IMR-90 (cell line): ENCODE measurements at regions of chr17 and their contacts with region 1.

Region 1: GRCh38 chr17:7989781-7990655 is 12.4 kb upstream of the GUCY2D start:
- DNase-seq: peak; percentile 44
- ATAC-seq: peak; percentile 94
- H3K4me3 ChIP-seq: peak overlapping the region; percentile 59
- H3K27ac ChIP-seq: no peak overlapping the region
- H3K4me1 ChIP-seq: peaks cover 5% of the 10 kb centered on the region; the same call in 1 of the 2 replicates
- H3K27me3 ChIP-seq: peaks cover 11% of the 10 kb centered on the region
- CTCF ChIP-seq: peak; percentile 81
- POLR2A ChIP-seq: no peak
- RAD21 ChIP-seq: peak; percentile 57

Region 2: GRCh38 chr17:7740481-7741001 is 249.5 kb before region 1 on chr17:
- CTCF ChIA-PET with region 1: interaction called, 4 read pairs
- POLR2A ChIA-PET with region 1: no interaction called
- dilution Hi-C with region 1: no loop called
- in situ Hi-C with region 1: loop called (anchors 25 kb)
- intact Hi-C with region 1: loop called (anchors 1 kb)
- DNase-seq: no peak
- ATAC-seq: no peak
- H3K4me3 ChIP-seq: no peak overlapping the region
- H3K27ac ChIP-seq: no peak overlapping the region
- H3K4me1 ChIP-seq: peaks cover 5% of the 10 kb centered on the region; the same call in 1 of the 2 replicates
- H3K27me3 ChIP-seq: peaks cover 43% of the 10 kb centered on the region
- CTCF ChIP-seq: no peak
- POLR2A ChIP-seq: no peak
- RAD21 ChIP-seq: no peak

Region 3: DNA sequence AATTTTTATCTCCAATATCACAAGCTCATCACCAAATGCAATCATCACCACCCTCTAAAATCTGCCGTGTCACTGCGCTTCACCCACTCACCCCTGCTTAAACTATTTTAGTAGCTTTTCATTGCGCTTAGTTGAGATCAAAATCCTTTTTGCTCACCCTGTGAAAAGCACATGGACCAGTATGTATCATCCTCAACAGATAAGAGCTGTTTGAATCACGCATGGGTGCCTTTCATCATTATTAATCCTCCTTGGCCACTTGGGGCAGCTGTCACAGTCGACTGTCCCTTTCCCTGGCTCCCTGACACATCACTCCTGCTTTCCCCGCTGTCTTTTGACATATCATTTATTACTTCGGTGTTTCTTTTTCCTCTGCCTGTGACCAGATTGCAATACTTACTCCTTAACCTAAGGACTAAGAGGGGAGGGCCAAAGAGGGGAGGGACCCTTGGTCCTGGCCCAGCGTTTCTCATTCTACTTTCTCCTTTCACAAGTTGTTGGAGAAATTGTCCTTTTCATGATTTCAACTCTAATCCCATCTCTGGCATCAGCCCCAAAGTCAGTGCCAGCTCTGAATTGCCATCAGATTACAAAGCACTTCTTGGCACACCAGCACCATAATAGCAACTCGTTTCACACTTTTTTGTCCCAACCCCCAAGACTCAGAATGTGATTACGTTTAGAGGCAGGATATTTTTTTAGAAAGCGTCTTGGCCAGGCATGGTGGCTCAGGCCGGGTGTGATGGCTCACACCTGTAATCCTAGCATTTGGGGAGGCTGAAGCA is 164.6 kb before region 1 on chr17:
- CTCF ChIA-PET with region 1: interaction called, 3 read pairs
- POLR2A ChIA-PET with region 1: no interaction called
- dilution Hi-C with region 1: no loop called
- in situ Hi-C with region 1: no loop called
- intact Hi-C with region 1: loop called (anchors 5 kb)
- DNase-seq: no peak
- ATAC-seq: peak; percentile 35
- H3K4me3 ChIP-seq: no peak overlapping the region
- H3K27ac ChIP-seq: no peak overlapping the region
- H3K4me1 ChIP-seq: no peaks in the 10 kb centered on the region; the same call in 1 of the 2 replicates
- H3K27me3 ChIP-seq: peaks cover 13% of the 10 kb centered on the region
- CTCF ChIP-seq: no peak
- POLR2A ChIP-seq: no peak
- RAD21 ChIP-seq: peak; percentile 21; the same call in 1 of the 2 replicates

Region 4: DNA sequence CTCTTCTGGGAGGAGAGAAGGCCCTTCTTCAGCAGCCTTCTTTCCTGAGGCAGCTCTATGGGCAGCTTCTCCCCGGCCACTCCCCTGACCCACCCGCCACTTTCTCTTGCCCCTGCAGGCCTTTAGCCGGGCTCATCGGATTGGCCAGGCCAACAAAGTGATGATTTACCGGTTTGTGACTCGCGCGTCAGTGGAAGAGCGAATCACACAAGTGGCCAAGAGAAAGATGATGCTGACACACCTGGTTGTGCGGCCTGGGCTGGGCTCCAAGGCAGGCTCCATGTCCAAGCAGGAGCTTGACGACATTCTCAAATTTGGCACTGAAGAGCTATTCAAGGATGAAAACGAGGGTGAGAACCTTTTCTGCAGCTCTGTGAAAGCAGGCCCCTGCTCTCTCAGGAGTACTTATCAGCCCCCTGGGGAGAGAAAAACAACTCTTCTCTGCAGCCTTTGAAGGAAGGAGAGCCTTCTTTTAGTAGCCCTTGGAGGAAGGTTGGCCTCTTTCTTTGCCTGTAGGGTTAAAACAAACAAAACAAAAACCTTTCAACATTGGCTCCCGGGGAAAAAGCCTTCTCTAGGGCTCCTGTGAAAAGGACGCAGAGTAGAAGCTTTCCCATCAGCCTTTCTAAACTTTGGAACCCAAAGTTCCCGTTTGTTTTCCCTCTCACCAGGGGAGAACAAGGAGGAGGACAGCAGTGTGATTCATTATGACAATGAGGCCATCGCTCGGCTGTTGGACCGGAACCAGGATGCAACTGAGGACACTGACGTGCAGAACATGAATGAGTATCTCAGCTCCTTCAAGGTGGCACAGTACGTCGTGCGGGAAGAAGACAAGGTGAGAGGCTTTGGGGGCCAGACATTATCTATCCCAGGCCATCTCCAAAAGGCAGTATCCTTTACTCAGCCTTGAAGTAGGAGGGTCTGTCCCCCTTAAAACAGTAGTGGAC is 86.6 kb before region 1 on chr17:
- CTCF ChIA-PET with region 1: interaction called, 10 read pairs
- POLR2A ChIA-PET with region 1: no interaction called
- dilution Hi-C with region 1: no loop called
- in situ Hi-C with region 1: no loop called
- intact Hi-C with region 1: no loop called
- DNase-seq: no peak
- ATAC-seq: no peak
- H3K4me3 ChIP-seq: no peak overlapping the region
- H3K27ac ChIP-seq: no peak overlapping the region
- H3K4me1 ChIP-seq: no peaks in the 10 kb centered on the region
- H3K27me3 ChIP-seq: no peaks in the 10 kb centered on the region
- CTCF ChIP-seq: no peak
- POLR2A ChIP-seq: no peak
- RAD21 ChIP-seq: no peak

Region 5: GRCh38 chr17:7931709-7932482 is 58.1 kb before region 1 on chr17 and contains the starts of genes CNTROB and TRAPPC1:
- CTCF ChIA-PET with region 1: interaction called, 4 read pairs
- POLR2A ChIA-PET with region 1: no interaction called
- dilution Hi-C with region 1: no loop called
- in situ Hi-C with region 1: no loop called
- intact Hi-C with region 1: loop called (anchors 5 kb)
- DNase-seq: peak; percentile 99
- ATAC-seq: peak; percentile 96
- H3K4me3 ChIP-seq: peak within 1 kb of the TSS; percentile 88
- H3K27ac ChIP-seq: peak within 1 kb of the TSS; percentile 90
- H3K4me1 ChIP-seq: peaks cover 7% of the 10 kb centered on the region; the same call in 1 of the 2 replicates
- H3K27me3 ChIP-seq: no peaks in the 10 kb centered on the region
- CTCF ChIP-seq: no peak
- POLR2A ChIP-seq: peak; percentile 77; the same call in 1 of the 2 replicates
- RAD21 ChIP-seq: no peak
- total RNA-seq, gene CNTROB: 12.5 and 12.7 TPM in 2 replicates
- total RNA-seq, gene TRAPPC1: 31.4 and 50.4 TPM in 2 replicates

Region 6: DNA sequence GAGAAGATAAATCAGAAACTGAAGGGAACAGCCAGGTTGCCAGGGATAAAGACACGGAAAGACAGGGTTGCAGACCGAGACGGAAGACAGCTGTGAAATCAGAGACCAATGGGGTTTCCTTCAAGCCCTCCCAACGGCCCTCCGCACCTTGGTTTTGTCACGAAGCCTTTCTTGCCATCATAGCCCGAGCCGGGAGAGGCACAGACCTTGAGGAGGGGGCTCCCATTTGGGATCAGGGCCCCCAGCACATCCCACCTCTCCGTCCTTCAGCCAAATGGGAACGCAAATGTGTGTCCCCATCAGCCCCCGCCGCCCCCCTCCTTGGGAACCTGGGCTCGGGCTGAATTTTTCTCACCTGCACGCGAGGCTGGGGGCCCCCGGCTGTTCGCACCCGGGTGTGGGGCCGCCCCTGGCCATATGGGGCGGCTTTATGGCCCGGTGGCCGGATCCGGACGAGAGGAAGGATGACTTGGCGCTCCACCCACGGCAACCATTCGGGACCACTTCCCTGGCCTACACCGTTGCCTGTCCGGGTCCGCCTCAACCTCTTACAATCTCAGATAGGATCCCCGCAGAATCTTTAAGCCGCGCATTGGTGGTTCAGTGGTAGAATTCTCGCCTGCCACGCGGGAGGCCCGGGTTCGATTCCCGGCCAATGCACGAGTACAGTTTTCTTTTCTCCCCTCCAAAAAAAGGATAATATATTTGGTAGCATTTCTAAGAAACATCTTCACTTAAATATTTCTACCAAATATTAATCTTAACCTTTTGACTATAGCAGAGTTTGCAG is 135.3 kb after region 1 on chr17:
- CTCF ChIA-PET with region 1: no interaction called
- POLR2A ChIA-PET with region 1: no interaction called
- dilution Hi-C with region 1: no loop called
- in situ Hi-C with region 1: no loop called
- intact Hi-C with region 1: no loop called
- DNase-seq: peak; percentile 60
- ATAC-seq: peak; percentile 5
- H3K4me3 ChIP-seq: peak overlapping the region; percentile 73
- H3K27ac ChIP-seq: no peak overlapping the region
- H3K4me1 ChIP-seq: peaks cover 8% of the 10 kb centered on the region
- H3K27me3 ChIP-seq: no peaks in the 10 kb centered on the region
- CTCF ChIP-seq: no peak
- POLR2A ChIP-seq: no peak
- RAD21 ChIP-seq: no peak

Region 7: GRCh38 chr17:8243827-8244226 is 253.8 kb after region 1 on chr17:
- CTCF ChIA-PET with region 1: no interaction called
- POLR2A ChIA-PET with region 1: no interaction called
- dilution Hi-C with region 1: no loop called
- in situ Hi-C with region 1: no loop called
- intact Hi-C with region 1: no loop called
- DNase-seq: no peak
- ATAC-seq: no peak
- H3K4me3 ChIP-seq: no peak overlapping the region
- H3K27ac ChIP-seq: no peak overlapping the region
- H3K4me1 ChIP-seq: no peaks in the 10 kb centered on the region
- H3K27me3 ChIP-seq: no peaks in the 10 kb centered on the region
- CTCF ChIP-seq: no peak
- POLR2A ChIP-seq: no peak
- RAD21 ChIP-seq: no peak

Region 8: DNA sequence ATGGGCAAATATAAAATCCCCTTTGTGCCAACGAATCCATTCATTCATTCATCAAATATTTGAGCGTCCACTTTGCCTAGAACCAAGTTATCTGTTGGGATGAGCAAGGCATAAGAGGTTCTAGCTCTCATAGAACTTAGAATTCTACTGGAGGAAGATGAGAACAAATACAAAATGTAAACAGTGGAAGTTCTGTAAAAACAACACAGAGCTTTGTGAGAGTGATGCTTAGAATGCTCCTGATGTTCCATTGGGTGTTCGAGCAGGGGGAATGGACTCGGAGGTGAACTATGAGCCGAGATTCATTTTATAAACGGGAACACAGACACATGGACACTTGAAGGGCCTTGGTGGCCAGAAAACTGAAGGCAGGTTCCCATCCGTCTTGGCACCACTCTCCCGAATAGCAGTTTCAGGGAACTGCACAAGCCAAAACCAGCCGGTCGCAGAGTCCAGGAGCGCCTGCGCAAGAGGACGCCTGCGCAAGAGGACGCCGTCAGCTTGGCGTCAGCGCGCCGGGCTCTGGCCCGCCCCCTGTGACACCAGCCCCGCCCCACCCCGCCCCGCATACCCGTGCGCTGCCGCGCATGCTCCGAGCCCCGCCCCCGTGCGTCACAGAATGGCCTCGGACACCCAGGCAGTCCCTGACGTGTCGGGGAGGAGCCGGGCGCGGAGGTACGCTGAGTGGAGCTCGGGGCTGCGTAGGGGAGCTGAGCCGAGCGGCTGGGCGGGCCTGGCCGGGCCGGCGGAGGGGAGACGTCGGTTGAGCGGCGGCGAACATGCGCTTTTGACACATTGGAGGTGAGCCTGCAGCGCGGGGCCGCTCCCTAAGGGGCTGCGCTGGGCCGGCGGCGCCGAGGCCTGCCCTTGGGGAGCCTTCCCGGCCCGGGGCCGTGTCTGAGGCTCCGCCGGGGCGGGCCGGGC is 445.5 kb after region 1 on chr17 and contains the start of gene NDEL1:
- CTCF ChIA-PET with region 1: no interaction called
- POLR2A ChIA-PET with region 1: no interaction called
- dilution Hi-C with region 1: no loop called
- in situ Hi-C with region 1: no loop called
- intact Hi-C with region 1: no loop called
- DNase-seq: peak; percentile 97
- ATAC-seq: peak; percentile 97
- H3K4me3 ChIP-seq: peak within 1 kb of the TSS; percentile 77
- H3K27ac ChIP-seq: peak within 1 kb of the TSS; percentile 90
- H3K4me1 ChIP-seq: no peaks in the 10 kb centered on the region
- H3K27me3 ChIP-seq: no peaks in the 10 kb centered on the region
- CTCF ChIP-seq: no peak
- POLR2A ChIP-seq: peak; percentile 98
- RAD21 ChIP-seq: no peak
- total RNA-seq, gene NDEL1: 28.9 and 40.3 TPM in 2 replicates